ENCODE measurements at regions of chr6 and their contacts with region 1.

Region 1: GRCh38 chr6:36979347-36979742 is 6.7 kb downstream of the MTCH1 start:
- DNase-seq: peak; percentile 63
- ATAC-seq: peak; percentile 77

Region 2: DNA sequence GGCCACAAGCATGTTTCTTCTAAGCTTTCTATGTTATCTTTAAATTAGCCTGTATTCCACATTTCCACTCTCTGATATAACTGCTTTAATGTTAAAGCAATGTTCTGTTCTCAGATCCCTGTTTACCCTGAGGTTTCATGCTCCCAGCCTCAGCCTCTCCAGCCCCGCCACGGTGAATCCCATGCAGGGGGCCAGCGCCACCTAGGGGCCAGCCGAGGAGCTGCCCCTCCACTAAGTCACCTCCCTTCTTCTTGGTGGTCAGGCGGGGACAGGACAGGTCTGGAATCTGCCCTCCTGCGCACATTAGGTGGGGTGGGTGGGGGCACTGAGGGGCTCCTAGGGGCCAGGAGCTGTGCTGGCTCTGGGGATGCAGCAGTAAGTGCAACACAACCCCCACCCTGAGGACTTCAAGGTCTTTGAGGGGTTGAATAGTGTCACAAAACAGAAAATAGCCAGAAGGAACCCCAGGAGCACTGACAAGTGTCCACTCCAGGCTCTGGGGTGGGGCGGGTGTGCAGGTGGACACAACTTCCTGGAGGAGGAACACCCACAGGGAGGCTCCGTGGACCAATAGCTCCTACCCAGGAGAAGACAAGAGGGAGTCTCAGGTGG is 220.1 kb before region 1 on chr6:
- intact Hi-C with region 1: no loop called
- DNase-seq: peak; percentile 89
- ATAC-seq: peak; percentile 93

Region 3: GRCh38 chr6:36885461-36886401 is 93.6 kb before region 1 on chr6 and contains the start of gene C6orf89:
- intact Hi-C with region 1: loop called (anchors 10 kb)
- DNase-seq: peak; percentile 99
- ATAC-seq: peak; percentile 99
- total RNA-seq, gene C6orf89: 73.2 TPM

Region 4: GRCh38 chr6:36897609-36898008 is 81.7 kb before region 1 on chr6:
- intact Hi-C with region 1: no loop called
- DNase-seq: no peak
- ATAC-seq: peak; percentile 67

Region 5: GRCh38 chr6:36912586-36912985 is 66.8 kb before region 1 on chr6:
- intact Hi-C with region 1: loop called (anchors 10 kb)
- DNase-seq: no peak
- ATAC-seq: no peak

Region 6: GRCh38 chr6:37021356-37022129 is 42.2 kb after region 1 on chr6:
- intact Hi-C with region 1: no loop called
- DNase-seq: no peak
- ATAC-seq: no peak

Region 7: DNA sequence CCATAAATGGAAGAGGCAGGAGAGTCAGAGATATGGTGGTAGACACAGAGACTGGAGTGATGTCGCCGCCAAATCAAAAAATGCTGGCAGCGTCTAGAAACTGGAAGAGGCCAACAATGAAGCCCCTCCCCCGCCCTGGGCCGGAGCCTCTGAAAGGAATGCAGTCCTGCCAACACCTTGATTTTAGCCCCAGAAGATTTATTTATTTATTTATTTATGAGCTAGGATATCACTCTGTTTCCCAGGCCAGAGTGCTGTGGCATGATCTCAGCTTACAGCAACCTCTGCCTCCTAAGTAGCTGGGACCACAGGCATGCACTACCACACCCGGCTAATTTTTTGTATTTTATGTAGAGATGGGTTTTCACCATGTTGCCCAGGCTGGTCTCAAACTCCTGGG is 603.0 kb after region 1 on chr6:
- intact Hi-C with region 1: no loop called
- DNase-seq: no peak
- ATAC-seq: no peak

Measured in Right ventricle myocardium superior (tissue), 1 donor.